ENCODE measurements at regions of chr10 and their contacts with region 1.

Region 1: GRCh38 chr10:6401562-6402348 is 178.3 kb downstream of the PRKCQ start:
- DNase-seq: peak; percentile 89
- H3K4me3 ChIP-seq: peak overlapping the region; percentile 23 to 80 (median 36)
- H3K27ac ChIP-seq: peak overlapping the region; percentile 86
- H3K4me1 ChIP-seq: peaks cover 6% of the 10 kb centered on the region
- H3K27me3 ChIP-seq: peaks cover 2 to 9% of the 10 kb centered on the region in 2 experiments
- CTCF ChIP-seq: peak; percentile 62 to 76
- POLR2A ChIP-seq: no peak

Region 2: GRCh38 chr10:5971315-5971832 is 430.4 kb before region 1 on chr10:
- CTCF ChIA-PET with region 1: interaction called, 11 read pairs
- POLR2A ChIA-PET with region 1: no interaction called
- dilution Hi-C with region 1: no loop called
- intact Hi-C with region 1: no loop called
- DNase-seq: peak; percentile 88
- H3K4me3 ChIP-seq: peak overlapping the region in 1 of 3 experiments; percentile 28
- H3K27ac ChIP-seq: peak overlapping the region; percentile 88
- H3K4me1 ChIP-seq: peaks cover 40% of the 10 kb centered on the region
- H3K27me3 ChIP-seq: no peaks in the 10 kb centered on the region
- CTCF ChIP-seq: no peak
- POLR2A ChIP-seq: no peak

Region 3: GRCh38 chr10:6108603-6109443 is 292.9 kb before region 1 on chr10:
- CTCF ChIA-PET with region 1: interaction called, 74 read pairs
- POLR2A ChIA-PET with region 1: no interaction called
- dilution Hi-C with region 1: no loop called
- intact Hi-C with region 1: loop called (anchors 1 kb)
- DNase-seq: peak; percentile 61
- H3K4me3 ChIP-seq: no peak overlapping the region
- H3K27ac ChIP-seq: no peak overlapping the region
- H3K4me1 ChIP-seq: peaks cover under 1% of the 10 kb centered on the region
- H3K27me3 ChIP-seq: no peaks in the 10 kb centered on the region
- CTCF ChIP-seq: peak; percentile 45 to 53
- POLR2A ChIP-seq: no peak

Region 4: DNA sequence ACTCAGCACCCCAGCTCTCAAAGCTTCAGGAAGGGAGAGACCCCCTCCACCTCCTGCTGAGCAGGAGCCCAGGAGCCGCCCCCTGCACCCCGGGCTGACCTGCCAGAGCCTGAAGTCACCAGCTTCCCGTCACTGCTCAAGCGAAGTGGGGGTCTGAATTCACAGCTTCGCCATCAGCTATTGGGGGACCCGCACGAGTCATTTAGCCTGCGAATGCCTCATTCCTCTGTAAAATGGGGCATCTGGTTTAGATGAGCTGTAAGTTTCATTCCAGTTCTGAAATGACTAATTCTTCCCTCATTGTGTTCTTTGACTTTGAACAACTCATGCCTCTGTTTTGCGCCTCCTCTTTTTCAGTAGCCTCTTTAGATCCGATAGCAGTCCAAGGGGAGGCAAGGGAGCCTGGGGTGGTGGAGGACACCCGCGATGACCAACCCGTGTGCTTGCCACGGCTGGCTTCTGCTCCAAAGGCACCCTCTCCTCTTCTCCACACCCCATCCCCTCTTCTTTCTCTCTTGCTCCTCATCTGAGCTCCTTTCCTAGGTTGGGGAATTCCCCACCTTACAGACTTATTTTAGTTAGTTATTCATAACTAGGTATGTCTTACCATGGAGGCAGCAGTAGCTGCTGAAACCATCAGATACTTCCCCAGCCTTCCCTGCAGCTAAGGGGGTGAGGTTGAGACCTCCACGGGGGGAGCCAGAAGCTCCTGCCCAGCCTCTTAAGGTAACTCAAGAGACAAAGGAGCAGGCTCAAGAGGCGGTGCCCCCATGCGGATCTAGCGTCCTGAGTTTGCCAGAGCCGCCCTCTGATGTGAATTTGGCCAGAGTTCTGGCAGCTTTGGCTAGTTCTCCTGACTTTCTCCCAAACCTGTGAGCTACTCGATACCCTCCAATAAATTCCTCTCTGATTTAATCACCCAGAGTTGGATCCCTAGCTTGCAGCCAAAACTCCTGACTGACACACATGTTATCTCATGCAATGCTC is 265.2 kb before region 1 on chr10:
- CTCF ChIA-PET with region 1: interaction called, 15 read pairs
- POLR2A ChIA-PET with region 1: no interaction called
- dilution Hi-C with region 1: no loop called
- intact Hi-C with region 1: no loop called
- DNase-seq: no peak
- H3K4me3 ChIP-seq: no peak overlapping the region
- H3K27ac ChIP-seq: no peak overlapping the region
- H3K4me1 ChIP-seq: peaks cover 5% of the 10 kb centered on the region
- H3K27me3 ChIP-seq: peaks cover 2 to 9% of the 10 kb centered on the region in 2 experiments
- CTCF ChIP-seq: no peak
- POLR2A ChIP-seq: no peak

Region 5: GRCh38 chr10:6171881-6172695 is 229.7 kb before region 1 on chr10:
- CTCF ChIA-PET with region 1: interaction called, 21 read pairs
- POLR2A ChIA-PET with region 1: interaction called, 4 read pairs
- dilution Hi-C with region 1: no loop called
- intact Hi-C with region 1: no loop called
- DNase-seq: peak; percentile 88
- H3K4me3 ChIP-seq: no peak overlapping the region
- H3K27ac ChIP-seq: peak overlapping the region; percentile 74
- H3K4me1 ChIP-seq: peaks cover 42% of the 10 kb centered on the region
- H3K27me3 ChIP-seq: no peaks in the 10 kb centered on the region
- CTCF ChIP-seq: no peak
- POLR2A ChIP-seq: no peak

Region 6: GRCh38 chr10:6228010-6228511 is 173.7 kb before region 1 on chr10:
- CTCF ChIA-PET with region 1: interaction called, 18 read pairs
- POLR2A ChIA-PET with region 1: no interaction called
- dilution Hi-C with region 1: no loop called
- intact Hi-C with region 1: no loop called
- DNase-seq: peak; percentile 53
- H3K4me3 ChIP-seq: no peak overlapping the region
- H3K27ac ChIP-seq: no peak overlapping the region
- H3K4me1 ChIP-seq: peaks cover 14% of the 10 kb centered on the region
- H3K27me3 ChIP-seq: no peaks in the 10 kb centered on the region
- CTCF ChIP-seq: no peak
- POLR2A ChIP-seq: no peak

Region 7: GRCh38 chr10:6320320-6321010 is 81.3 kb before region 1 on chr10:
- CTCF ChIA-PET with region 1: no interaction called
- POLR2A ChIA-PET with region 1: no interaction called
- dilution Hi-C with region 1: no loop called
- intact Hi-C with region 1: no loop called
- DNase-seq: no peak
- H3K4me3 ChIP-seq: no peak overlapping the region
- H3K27ac ChIP-seq: no peak overlapping the region
- H3K4me1 ChIP-seq: no peaks in the 10 kb centered on the region
- H3K27me3 ChIP-seq: no peaks in the 10 kb centered on the region
- CTCF ChIP-seq: no peak
- POLR2A ChIP-seq: no peak

Region 8: DNA sequence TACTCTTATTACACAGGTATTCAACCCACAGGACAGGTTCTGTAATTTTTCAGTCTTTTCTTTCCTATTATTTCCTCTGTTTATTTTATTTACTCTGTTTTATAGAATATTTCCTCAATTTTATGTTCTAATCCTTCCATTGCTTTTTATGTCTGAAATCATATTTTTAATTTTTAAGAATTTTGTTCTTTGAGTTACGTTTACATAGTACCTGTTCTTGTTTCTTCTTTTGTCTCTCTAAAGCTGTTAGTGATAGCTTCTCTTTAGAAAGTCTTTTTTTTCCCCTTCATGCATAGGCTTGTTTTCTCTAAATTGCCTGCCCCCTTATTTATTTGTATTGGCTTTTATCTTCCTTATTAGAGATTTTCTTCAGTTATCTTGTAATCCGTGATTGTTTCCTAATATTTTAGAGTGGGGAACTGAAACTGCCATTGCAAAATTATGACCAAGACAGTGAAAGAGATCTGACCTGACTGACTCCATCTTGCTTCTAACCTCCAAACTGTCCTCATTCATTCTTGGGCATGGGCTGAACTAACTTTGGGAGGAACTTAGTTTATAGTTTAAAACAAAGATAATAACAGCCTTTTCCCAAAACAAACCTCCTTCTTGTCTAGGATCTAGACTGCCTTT is 11.4 kb before region 1 on chr10:
- CTCF ChIA-PET with region 1: interaction called, 14 read pairs
- POLR2A ChIA-PET with region 1: no interaction called
- dilution Hi-C with region 1: no loop called
- intact Hi-C with region 1: no loop called
- DNase-seq: no peak
- H3K4me3 ChIP-seq: no peak overlapping the region
- H3K27ac ChIP-seq: no peak overlapping the region
- H3K4me1 ChIP-seq: no peaks in the 10 kb centered on the region
- H3K27me3 ChIP-seq: no peaks in the 10 kb centered on the region
- CTCF ChIP-seq: no peak
- POLR2A ChIP-seq: no peak

Region 9: DNA sequence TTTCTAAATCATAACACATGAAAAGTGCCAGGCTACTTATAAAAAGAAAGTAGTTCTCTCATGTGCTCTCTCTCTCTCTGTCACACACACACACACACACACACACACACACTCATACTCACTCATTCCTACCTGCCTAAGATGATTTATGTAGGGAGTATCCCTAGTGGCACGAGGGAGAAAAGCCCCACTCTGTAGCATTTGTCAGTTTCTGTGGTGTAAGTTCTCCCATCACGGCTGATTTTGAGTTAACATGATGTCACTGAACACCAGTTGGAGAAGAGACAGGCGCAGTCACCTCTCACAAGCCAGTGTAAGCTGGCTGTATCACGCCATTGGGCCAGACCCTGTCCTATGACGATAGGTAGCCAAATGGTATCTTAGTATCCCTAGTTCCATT is 613.7 kb after region 1 on chr10:
- CTCF ChIA-PET with region 1: no interaction called
- POLR2A ChIA-PET with region 1: no interaction called
- dilution Hi-C with region 1: no loop called
- intact Hi-C with region 1: no loop called
- DNase-seq: no peak
- H3K4me3 ChIP-seq: no peak overlapping the region
- H3K27ac ChIP-seq: no peak overlapping the region
- H3K4me1 ChIP-seq: no peaks in the 10 kb centered on the region
- H3K27me3 ChIP-seq: no peaks in the 10 kb centered on the region
- CTCF ChIP-seq: no peak
- POLR2A ChIP-seq: no peak

Measured in endothelial cell of umbilical vein (primary cell).